B cell (primary cell): ENCODE measurements at regions of chr5 and their contacts with region 1.

Region 1: GRCh38 chr5:158244882-158245281 is 385.9 kb upstream of the CLINT1 start:
- DNase-seq: no peak
- ATAC-seq: no peak
- H3K4me3 ChIP-seq: no peak overlapping the region
- H3K4me3 Mint-ChIP-seq: no peak overlapping the region
- H3K27ac ChIP-seq: no peak overlapping the region
- H3K27ac Mint-ChIP-seq: no peak overlapping the region
- H3K4me1 ChIP-seq: no peaks in the 10 kb centered on the region
- H3K4me1 Mint-ChIP-seq: peaks cover 4% of the 10 kb centered on the region
- H3K27me3 ChIP-seq: peaks cover 0 to 6% (median 0%) of the 10 kb centered on the region in 4 experiments
- H3K27me3 Mint-ChIP-seq: peaks cover 17% of the 10 kb centered on the region
- CTCF ChIP-seq: no peak

Region 2: GRCh38 chr5:159650803-159651202 is 1405.9 kb after region 1 on chr5:
- CTCF ChIA-PET with region 1: no interaction called
- POLR2A ChIA-PET with region 1: no interaction called
- intact Hi-C with region 1: loop called (anchors 5 kb)
- DNase-seq: no peak
- ATAC-seq: no peak
- H3K4me3 ChIP-seq: no peak overlapping the region
- H3K4me3 Mint-ChIP-seq: no peak overlapping the region
- H3K27ac ChIP-seq: no peak overlapping the region
- H3K27ac Mint-ChIP-seq: no peak overlapping the region
- H3K4me1 ChIP-seq: no peaks in the 10 kb centered on the region
- H3K4me1 Mint-ChIP-seq: no peaks in the 10 kb centered on the region
- H3K27me3 ChIP-seq: peaks cover 0 to 2% (median 0%) of the 10 kb centered on the region in 4 experiments
- H3K27me3 Mint-ChIP-seq: no peaks in the 10 kb centered on the region
- CTCF ChIP-seq: no peak